ENCODE measurements at regions of chr11 and their contacts with region 1.

Region 1: DNA sequence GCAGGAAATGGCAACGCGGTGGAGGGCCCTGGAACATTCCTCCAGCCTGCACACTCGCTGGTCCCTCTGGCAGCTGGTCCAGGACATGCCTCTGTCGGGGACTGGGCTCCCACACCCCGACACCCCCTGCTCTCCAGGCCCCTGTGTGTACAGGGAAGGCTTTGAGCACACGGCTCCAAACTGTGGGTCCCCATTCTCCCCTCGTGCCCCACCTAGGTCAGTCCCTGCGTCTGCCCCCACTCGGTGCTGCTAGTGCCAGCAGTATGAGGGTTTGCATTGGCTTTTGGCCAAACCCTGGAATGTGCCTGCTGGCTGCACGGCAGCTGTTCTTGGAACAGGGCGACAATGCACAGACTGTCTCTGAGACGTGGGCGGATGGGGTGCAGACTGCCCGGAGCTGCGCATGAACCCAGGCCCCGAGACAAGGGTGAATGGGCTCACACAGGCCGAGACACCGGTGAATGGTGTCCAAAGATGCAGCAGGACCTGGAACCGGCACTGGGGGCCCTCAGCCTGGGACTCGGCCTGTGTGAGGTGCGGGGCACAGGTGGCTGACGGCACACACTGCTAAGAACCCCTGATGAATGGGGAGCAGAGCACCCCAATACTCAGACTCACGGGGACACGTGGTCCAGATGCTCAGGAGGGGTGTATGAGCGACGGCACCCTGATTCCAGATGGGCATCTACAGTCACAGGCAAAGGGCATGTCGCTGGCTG is 7.5 kb upstream of the SYT8 start:
- DNase-seq: peak; percentile 38 to 64
- ATAC-seq: peak; percentile 45 to 81 (median 74)
- H3K4me3 ChIP-seq: no peak overlapping the region
- H3K27ac ChIP-seq: peak overlapping the region in 6 of 10 donors; percentile 15 to 45 (median 36)
- H3K4me1 ChIP-seq: peaks cover 2 to 25% (median 15%) of the 10 kb centered on the region in 9 donors
- H3K27me3 ChIP-seq: peaks cover 0 to 39% (median 12%) of the 10 kb centered on the region in 7 donors
- CTCF ChIP-seq: no peak

Region 2: DNA sequence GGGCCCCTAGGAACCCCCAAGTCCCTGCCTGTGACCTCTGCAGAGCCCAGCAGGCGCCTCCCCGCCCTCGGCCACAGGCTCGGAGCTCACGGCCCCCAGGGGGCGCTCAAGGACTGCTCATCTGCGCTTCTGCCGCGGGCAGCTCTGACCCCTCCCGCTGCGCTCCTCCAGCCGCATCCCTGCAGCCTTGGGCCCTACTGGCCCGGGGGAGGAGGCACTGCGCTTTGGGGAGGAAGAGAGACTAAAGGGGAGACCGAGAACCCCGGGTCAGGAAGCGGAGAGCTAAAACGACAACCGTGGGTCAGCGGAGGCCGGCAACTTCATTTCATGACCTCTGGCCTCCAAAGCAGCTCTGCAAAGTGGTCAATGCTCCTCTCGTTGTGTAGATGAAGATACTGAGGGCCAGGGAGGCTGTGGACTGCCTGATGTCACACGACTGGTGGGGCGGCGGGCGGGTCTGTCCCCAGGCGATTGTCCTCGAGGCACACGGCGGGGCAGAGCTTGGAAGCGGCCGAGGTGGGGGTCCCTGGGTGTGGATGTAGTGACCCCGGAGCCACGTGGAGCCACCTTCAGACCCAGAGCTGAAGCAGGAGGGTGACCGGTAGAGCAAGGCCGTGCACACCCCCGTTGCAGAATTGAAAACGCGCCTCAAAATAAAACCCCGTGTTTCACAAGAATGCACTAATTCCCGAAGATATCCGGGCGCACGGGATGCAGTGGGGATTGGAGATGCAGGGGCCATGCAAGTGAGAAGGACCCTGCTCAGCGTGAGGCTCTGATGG is 133.0 kb before region 1 on chr11:
- intact Hi-C with region 1: loop called (anchors 1 to 2 kb)
- DNase-seq: peak; percentile 89 to 94
- ATAC-seq: peak; percentile 95 to 99 (median 97)
- H3K4me3 ChIP-seq: peak overlapping the region in 9 of 10 donors; percentile 26 to 64 (median 48)
- H3K27ac ChIP-seq: peak overlapping the region; percentile 3 to 80 (median 71)
- H3K4me1 ChIP-seq: peaks cover 5 to 15% (median 9%) of the 10 kb centered on the region in 9 donors
- H3K27me3 ChIP-seq: peaks cover 0 to 22% (median 0%) of the 10 kb centered on the region in 7 donors
- CTCF ChIP-seq: peak; percentile 93 to 99 (median 95)

Region 3: GRCh38 chr11:1706634-1707400 is 120.4 kb before region 1 on chr11:
- intact Hi-C with region 1: loop called in 2 of 10 experiments (anchors 1 to 5 kb)
- DNase-seq: no peak
- ATAC-seq: peak in 7 of 8 donors; percentile 42 to 85 (median 66)
- H3K4me3 ChIP-seq: no peak overlapping the region
- H3K27ac ChIP-seq: no peak overlapping the region
- H3K4me1 ChIP-seq: no peaks in the 10 kb centered on the region
- H3K27me3 ChIP-seq: peaks cover 0 to 15% (median 0%) of the 10 kb centered on the region in 7 donors
- CTCF ChIP-seq: peak in 7 of 9 donors; percentile 28 to 54 (median 42)

Region 4: DNA sequence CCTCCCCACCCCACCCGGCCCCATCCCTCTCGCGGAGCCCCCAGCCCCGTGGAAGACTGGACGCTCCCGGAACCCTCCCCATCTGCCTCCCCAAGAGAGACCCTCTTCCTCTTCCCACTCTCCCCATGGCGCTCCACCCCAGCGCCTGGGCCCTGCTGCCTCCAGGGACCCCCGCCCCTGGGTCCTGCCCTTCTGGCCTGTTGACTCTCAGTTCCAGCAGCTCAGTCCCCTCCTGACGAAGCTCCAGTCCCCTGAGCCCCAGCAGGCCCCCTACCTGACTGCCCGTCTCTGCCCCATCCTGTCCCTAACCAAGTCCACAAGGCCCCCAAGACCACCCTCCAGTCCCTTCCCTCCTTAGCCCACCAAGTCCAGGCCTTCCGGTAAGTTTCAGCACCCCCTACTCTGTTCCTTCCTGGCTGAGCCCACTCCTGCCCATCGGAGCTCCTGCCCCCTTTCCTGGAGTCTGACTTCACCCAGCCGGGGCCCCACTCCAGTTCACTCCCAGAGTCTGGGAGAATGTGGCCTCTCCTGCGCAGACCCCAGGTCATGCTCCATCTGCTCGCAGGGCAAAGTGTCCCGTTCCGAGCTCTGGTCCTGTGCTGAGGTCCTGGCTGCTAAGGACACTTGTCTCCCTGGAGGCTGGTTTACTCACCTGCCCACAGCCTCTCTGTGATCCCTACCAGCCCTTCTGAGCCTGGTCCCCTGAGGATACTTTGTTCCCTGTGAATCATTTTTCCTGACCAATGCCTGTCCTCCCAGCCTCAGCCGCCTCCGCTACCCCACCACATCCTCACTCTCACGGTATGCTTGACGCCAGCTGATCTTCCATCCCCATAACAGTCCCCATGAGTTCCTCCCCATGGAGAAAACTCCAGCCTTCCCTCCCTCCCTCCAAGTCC is 77.6 kb before region 1 on chr11:
- intact Hi-C with region 1: loop called in 1 of 10 experiments (anchors 10 kb)
- DNase-seq: no peak
- ATAC-seq: peak in 2 of 8 donors; percentile 1 to 2
- H3K4me3 ChIP-seq: peak overlapping the region in 8 of 10 donors; percentile 27 to 48 (median 40)
- H3K27ac ChIP-seq: peak overlapping the region in 2 of 10 donors; percentile 57 to 65
- H3K4me1 ChIP-seq: peaks cover 24 to 70% (median 60%) of the 10 kb centered on the region in 9 donors
- H3K27me3 ChIP-seq: peaks cover 0 to 23% (median 13%) of the 10 kb centered on the region in 7 donors
- CTCF ChIP-seq: no peak

Region 5: DNA sequence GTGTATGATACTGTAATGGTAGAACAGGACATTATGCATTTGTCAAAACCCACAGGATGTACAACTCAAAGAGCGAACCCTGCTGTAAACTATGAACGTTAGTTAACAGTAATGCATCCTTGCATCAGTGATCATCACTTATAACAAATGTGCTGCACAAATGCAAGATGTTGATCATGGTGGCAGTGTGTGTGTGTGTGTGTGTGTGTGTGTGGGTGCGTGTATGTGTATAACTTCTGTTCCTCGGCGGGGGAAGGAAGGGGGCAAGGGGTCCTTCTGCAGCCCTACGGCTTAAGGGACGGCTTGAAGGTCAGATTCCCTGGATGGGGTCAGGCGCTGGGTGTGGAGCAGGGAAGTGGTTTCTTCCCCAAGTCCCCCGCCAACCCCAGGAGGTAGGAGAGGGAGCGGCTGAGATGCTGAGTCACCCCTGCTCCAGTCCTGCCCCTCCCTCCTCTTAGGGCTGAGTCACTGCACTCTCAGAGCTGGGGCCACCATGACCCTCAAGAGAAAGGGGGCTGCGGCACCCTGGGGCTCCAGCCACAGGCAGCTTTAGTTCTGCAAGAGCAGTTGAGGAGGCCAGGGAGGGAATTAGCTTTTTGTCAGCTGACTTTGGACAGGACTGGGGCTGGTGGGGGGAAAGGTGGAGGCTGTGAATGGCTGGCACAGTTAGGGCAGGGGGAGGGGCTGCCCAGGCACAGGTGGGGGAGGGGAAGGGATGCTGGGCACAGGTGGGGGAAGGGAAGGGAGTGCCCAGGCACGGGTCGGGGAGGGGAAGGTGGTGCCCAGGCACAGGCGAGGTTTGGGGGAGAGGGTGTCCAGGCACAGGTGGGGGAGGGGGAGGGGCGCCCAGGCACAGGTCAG is 54.8 kb before region 1 on chr11:
- intact Hi-C with region 1: loop called in 1 of 10 experiments (anchors 10 kb)
- DNase-seq: peak in 1 of 2 donors; percentile 34
- ATAC-seq: peak; percentile 46 to 90 (median 80)
- H3K4me3 ChIP-seq: peak overlapping the region in 1 of 10 donors; percentile 4
- H3K27ac ChIP-seq: peak overlapping the region in 1 of 10 donors; percentile 76
- H3K4me1 ChIP-seq: peaks cover 0 to 37% (median 0%) of the 10 kb centered on the region in 9 donors
- H3K27me3 ChIP-seq: no peaks in the 10 kb centered on the region
- CTCF ChIP-seq: no peak